Right ventricle myocardium superior (tissue), 1 donor: ENCODE measurements at regions of chr6 and their contacts with region 1.

Region 1: GRCh38 chr6:134174672-134175198 is 122.3 kb upstream of the SLC2A12 start:
- DNase-seq: peak; percentile 97
- ATAC-seq: peak; percentile 93

Region 2: GRCh38 chr6:134295953-134296553 is 121.3 kb after region 1 on chr6:
- intact Hi-C with region 1: no loop called
- DNase-seq: no peak
- ATAC-seq: peak; percentile 92

Region 3: GRCh38 chr6:134331256-134331655 is 156.5 kb after region 1 on chr6:
- intact Hi-C with region 1: no loop called
- DNase-seq: no peak
- ATAC-seq: no peak

Region 4: DNA sequence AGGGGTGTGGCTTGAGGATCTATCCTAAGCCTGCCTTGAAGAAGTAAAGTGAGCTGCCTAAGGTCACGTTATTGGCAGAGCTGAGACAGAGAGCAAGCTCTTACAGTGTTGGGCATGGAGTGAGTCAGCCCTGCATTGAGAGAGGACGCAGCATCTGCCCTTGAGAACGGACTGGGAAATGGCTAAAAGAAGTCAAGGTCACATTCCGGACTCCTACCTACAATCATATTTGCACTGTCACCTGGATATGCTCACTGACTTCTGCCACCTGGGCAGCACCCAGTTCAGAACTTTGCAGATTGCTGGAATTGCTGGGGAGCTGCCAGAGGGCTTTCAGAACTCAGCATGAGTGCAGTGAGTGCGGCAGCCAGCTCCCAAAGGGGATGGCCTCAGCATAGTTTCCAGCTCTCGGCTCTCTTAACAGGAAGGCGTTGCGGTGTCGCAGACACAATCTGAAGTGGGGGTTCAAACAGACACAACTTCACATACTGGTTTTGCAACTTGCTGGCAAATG is 342.5 kb after region 1 on chr6:
- intact Hi-C with region 1: loop called (anchors 10 kb)
- DNase-seq: peak; percentile 87
- ATAC-seq: peak; percentile 96

Region 5: DNA sequence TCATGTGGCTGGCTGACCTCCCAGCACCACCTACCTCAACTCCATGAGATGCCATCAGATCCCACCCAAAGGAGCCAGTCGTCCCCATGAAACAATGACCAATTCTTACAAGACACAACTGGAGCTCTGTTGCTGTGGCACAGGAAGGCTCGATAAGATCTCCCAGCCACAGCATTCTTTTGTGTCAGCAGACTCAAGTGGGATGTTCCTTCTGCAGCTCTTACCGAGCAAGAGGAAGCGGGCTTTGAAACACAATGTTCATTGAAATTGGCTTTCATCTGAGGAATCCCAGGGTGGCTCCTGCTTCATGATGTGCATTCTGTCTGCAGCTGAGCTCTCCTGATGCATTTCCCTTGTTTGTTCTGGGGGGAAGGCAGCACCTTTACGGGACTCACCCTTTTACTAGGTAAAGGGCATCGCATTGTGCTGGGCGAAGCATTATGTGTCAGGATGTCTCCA is 365.2 kb after region 1 on chr6:
- intact Hi-C with region 1: loop called (anchors 10 kb)
- DNase-seq: no peak
- ATAC-seq: peak; percentile 53

Region 6: DNA sequence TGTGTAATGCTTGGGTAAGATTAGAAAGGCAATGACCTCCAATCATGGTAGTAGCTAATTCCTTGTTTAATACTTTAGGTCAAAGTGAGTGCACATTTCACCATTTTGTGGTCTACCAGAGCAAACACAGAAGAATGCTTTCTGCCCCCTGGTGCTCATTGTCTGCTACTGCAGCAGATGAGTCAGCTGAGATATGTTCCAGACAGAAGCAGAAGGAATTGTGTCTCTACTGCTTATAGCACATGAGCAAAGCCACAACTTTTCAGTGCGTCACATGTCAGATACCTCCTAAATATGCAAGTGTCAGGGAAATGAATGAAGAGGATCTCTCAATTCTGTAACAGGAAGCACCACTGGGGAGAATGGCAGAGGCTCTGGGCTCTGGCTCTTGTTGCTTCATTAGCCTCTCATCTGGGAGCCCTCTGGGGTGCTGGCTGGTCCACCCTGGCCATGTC is 466.3 kb after region 1 on chr6:
- intact Hi-C with region 1: loop called (anchors 5 kb)
- DNase-seq: peak; percentile 82
- ATAC-seq: peak; percentile 96

Region 7: GRCh38 chr6:134822920-134823709 is 648.4 kb after region 1 on chr6:
- intact Hi-C with region 1: loop called (anchors 5 kb)
- DNase-seq: peak; percentile 55
- ATAC-seq: peak; percentile 84

Region 8: GRCh38 chr6:134882426-134883038 is 707.8 kb after region 1 on chr6:
- intact Hi-C with region 1: loop called (anchors 5 kb)
- DNase-seq: peak; percentile 70
- ATAC-seq: peak; percentile 86